Activated T-helper 2 cell treated with anti-CD3 and anti-CD28 coated beads, Interferon-gamma antibody, Interleukin-2, Interleukin-4, amounts not matched to agents 10 μg/mL and 5 μg/mL and 100 μg/mL, durations not matched to agents 14 hours and 24 hours and 36 hours (primary cell): ENCODE measurements at regions of chr9 and their contacts with region 1.

Region 1: DNA sequence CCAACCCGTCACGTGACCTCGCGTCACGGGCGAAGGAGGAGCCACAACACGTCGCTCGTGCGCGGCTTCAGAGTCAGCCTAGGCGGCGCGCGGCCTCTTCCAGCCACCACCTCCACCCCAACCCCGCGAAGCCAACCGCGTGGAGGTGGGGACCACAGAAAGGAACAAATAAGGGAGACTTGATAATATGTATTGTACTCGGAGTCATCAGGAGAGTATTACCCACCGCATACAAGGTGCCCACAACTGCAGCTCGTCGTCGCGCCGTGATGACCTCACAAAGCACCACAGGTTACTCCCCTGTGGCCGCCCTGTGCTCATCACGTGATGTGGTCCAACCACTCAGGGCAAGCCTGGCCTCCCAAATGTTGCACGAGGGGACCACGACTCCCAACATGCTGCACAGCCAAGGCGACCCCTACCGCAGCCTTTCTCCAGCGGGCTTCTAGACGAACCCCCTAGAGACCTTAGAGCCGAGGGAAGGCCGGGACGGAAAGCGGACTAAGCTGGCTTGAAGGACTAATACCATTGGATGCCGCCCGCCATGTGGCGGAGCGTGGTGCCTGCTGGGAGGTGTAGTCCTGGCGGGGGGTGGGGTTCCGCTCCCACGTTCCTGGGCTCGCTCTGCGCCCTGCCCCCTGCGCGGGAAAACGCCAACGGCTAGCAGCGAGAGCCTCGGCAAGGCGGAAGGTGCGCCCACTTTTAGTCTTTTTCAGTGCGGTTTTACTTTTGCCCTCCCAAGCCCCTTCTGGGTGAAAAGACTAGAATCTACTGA is 423 bp upstream of the UBAP2 start:
- DNase-seq: peak; percentile 96
- H3K4me3 Mint-ChIP-seq: peak overlapping the region; percentile 91
- H3K27ac Mint-ChIP-seq: peak overlapping the region; percentile 98
- H3K4me1 Mint-ChIP-seq: peaks cover 39% of the 10 kb centered on the region
- H3K27me3 Mint-ChIP-seq: no peaks in the 10 kb centered on the region

Region 2: DNA sequence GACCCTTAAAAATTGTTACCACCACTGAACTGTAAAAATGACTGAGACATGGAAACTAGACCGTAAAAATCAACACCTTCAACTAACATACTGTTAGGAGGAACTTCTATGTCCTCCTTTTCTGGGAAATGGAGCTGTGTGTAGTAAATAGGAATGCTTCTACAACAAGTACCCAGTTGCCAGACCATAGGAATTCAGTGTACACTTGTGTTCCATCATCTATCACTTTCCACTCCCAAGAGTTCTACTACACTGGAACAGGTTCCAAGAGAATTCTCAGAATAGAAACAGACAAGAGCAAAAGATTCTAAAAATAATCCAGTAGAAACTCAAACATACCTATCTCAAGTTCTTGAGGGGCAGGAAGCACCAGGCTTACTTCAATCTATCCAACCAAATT is 24.0 kb before region 1 on chr9:
- intact Hi-C with region 1: no loop called
- DNase-seq: no peak
- H3K4me3 Mint-ChIP-seq: no peak overlapping the region
- H3K27ac Mint-ChIP-seq: peak overlapping the region; percentile 21
- H3K4me1 Mint-ChIP-seq: peaks cover 11% of the 10 kb centered on the region
- H3K27me3 Mint-ChIP-seq: no peaks in the 10 kb centered on the region

Region 3: GRCh38 chr9:34458013-34458958 is 409.2 kb after region 1 on chr9 and contains the starts of genes DNAI1 and FAM219A:
- intact Hi-C with region 1: loop called (anchors 2 kb)
- DNase-seq: peak; percentile 99
- H3K4me3 Mint-ChIP-seq: peak within 1 kb of the TSS; percentile 88
- H3K27ac Mint-ChIP-seq: peak within 1 kb of the TSS; percentile 60
- H3K4me1 Mint-ChIP-seq: peaks cover 43% of the 10 kb centered on the region
- H3K27me3 Mint-ChIP-seq: peaks cover 17% of the 10 kb centered on the region
- total RNA-seq, gene DNAI1: not detected in 2 replicates
- total RNA-seq, gene FAM219A: 17.3 and 19.7 TPM in 2 replicates